ENCODE measurements at regions of chr17 and their contacts with region 1.

Region 1: GRCh38 chr17:42517516-42517915 is 18.5 kb upstream of the NAGLU start:
- DNase-seq: peak; percentile 77
- H3K4me3 ChIP-seq: no peak overlapping the region
- H3K27ac ChIP-seq: no peak overlapping the region
- H3K4me1 ChIP-seq: peaks cover 6% of the 10 kb centered on the region
- CTCF ChIP-seq: peak; percentile 99

Region 2: DNA sequence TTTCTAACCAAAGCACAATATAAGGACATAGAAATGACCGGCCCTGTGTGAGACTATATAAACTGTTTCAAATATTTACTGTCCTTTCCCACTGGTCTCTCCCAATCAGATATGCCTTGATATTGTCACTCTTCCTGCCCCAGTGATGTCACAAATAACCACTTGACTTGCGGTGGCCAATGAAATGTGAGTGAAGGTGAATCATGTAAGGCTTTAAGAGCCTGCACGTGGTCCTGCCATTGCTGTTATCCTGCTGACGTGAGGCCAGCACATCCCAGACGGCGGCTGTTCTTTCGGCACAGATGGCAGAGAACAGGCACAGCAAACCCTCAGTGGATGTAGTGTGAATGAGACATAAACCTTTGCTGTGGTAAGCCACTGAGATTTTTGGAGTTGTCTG is 646.9 kb before region 1 on chr17:
- CTCF ChIA-PET with region 1: no interaction called
- POLR2A ChIA-PET with region 1: no interaction called
- intact Hi-C with region 1: no loop called
- DNase-seq: no peak
- H3K4me3 ChIP-seq: no peak overlapping the region
- H3K27ac ChIP-seq: no peak overlapping the region
- H3K4me1 ChIP-seq: no peaks in the 10 kb centered on the region
- CTCF ChIP-seq: no peak

Region 3: DNA sequence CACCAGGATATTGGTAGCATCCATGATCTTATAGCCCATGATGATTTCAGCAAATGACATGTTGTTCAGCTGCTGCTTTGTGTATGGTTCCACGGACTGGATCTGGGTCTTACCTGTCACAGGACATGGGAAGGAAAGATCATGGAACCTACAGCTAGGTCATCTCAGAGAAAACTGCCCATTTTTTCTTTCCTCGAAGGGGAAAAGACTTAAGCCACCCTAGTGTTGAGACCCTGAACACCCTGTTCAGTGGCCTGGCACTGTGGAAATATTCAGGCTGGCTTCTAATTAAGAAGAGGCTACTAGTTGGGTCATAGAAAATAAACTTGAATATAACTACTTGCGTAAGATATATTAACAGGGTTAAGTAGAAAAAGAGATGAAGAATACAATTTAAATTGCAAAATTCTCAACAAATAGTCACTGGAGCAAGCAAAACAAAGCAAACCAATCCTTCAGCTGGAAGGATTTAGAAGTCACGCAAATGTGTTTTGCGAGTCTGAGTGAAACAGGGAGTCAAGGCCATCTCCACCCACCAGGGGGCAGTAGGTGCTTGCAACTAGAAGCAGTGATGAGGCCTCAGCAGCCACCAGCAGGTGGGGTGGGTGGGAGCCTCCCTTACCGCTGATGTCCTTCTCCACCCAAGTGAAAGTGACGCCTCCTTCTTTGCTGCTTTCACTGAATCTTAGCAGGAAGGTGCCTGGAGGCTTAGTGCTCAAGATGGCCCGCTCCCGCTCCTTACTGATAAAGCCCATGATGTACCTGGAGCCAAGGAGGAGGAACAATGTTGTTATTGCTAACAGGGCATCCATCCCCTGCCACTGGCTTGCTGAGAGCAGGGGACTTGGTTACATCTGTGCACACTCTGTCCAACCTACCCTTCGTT is 194.9 kb before region 1 on chr17:
- CTCF ChIA-PET with region 1: no interaction called
- POLR2A ChIA-PET with region 1: no interaction called
- intact Hi-C with region 1: loop called (anchors 2 kb)
- DNase-seq: peak; percentile 93
- H3K4me3 ChIP-seq: no peak overlapping the region
- H3K27ac ChIP-seq: no peak overlapping the region
- H3K4me1 ChIP-seq: peaks cover 14% of the 10 kb centered on the region
- CTCF ChIP-seq: peak; percentile 100

Region 4: GRCh38 chr17:42428141-42428944 is 89.2 kb before region 1 on chr17:
- CTCF ChIA-PET with region 1: no interaction called
- POLR2A ChIA-PET with region 1: interaction called, 5 read pairs
- intact Hi-C with region 1: loop called (anchors 1 kb)
- DNase-seq: peak; percentile 74
- H3K4me3 ChIP-seq: no peak overlapping the region
- H3K27ac ChIP-seq: no peak overlapping the region
- H3K4me1 ChIP-seq: peaks cover 14% of the 10 kb centered on the region
- CTCF ChIP-seq: peak; percentile 87

Region 5: DNA sequence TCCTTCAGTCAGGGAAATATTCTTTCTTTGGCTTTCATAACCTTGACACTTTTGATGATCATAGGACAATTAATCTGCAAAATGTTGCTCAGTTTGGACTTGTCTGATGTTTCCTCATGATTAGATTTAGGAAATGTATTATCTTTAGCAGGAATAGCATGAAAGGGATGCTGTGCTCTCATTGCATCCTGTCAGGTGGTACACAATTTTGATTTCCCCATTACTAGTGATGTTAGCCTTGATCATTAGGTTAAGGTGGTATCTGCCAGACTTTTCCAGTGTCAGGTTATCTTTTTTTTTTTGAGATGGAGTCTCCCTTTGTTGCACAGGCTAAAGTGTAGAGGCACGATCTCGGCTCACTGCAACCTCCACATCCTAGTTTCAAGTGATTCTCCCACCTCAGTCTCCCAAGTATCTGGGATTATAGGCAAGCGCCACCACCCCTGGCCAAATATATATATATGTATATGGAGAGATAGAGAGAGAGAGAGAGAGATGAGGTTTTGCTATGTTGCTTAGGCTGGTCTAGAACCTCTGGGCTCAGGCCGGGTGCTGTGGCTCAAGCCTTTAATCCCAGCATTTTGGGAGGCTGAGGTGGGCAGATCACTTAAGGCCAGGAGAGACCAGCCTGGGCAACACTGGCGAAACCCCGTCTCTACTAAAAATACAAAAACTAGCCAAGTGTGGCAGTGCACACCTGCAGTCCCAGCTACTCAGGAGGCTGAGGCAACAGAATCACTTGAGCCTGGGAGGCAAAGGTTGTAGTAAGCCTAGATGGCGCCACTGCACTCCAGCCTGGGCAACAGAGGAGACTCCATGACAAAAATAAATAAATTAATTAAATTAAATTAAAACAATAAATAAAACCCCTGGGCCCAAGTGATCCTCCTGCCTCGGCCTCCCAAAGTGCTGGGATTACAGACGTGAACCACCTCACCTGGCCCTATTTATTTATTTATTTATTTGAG is 78.6 kb before region 1 on chr17:
- CTCF ChIA-PET with region 1: no interaction called
- POLR2A ChIA-PET with region 1: interaction called, 3 read pairs
- intact Hi-C with region 1: loop called (anchors 1 kb)
- DNase-seq: peak; percentile 82
- H3K4me3 ChIP-seq: peak overlapping the region; percentile 4
- H3K27ac ChIP-seq: peak overlapping the region; percentile 35
- H3K4me1 ChIP-seq: peaks cover 34% of the 10 kb centered on the region
- CTCF ChIP-seq: peak; percentile 77

Region 6: GRCh38 chr17:42629411-42630009 is 112.0 kb after region 1 on chr17:
- CTCF ChIA-PET with region 1: no interaction called
- POLR2A ChIA-PET with region 1: no interaction called
- intact Hi-C with region 1: no loop called
- DNase-seq: no peak
- H3K4me3 ChIP-seq: no peak overlapping the region
- H3K27ac ChIP-seq: no peak overlapping the region
- H3K4me1 ChIP-seq: no peaks in the 10 kb centered on the region
- CTCF ChIP-seq: no peak

Measured in OCI-LY7 (cell line).